H1 (cell line): ENCODE measurements at regions of chr7 and their contacts with region 1.

Region 1: DNA sequence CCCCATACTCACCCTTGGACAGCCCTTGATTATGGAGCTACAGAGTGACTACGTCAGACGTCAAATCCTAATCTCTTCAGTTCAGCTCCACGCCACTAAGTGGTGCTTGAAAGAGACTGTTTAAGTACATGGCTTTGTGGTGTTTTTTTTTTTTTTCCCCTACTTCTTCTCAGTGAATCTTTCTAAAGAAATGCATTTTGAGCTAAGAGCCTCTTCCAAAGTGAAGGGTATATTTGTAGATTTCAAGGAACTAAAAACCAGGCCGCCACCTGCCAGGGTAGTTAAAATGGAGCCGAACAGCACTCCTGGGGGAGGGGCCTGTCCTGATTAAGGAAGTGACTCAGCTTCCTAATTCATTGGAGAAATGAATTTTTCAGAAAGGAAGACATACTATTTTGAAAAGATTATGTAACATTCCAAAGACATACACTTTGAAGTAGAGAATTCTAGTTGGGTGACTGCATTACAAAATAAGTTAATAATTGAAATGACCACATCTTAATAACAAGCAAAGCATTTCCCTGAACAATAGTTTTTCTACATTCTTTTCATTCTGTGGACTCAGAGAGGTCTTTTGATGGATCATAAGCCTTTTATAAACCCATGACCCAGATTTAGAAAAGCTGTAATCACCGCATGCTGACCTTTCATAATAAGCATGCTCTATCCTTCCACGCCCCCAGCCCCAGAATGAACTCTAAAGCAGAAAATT is 20.6 kb upstream of the VPS41 start:
- DNase-seq: no peak
- H3K4me3 ChIP-seq: no peak overlapping the region
- H3K27ac ChIP-seq: no peak overlapping the region
- H3K4me1 ChIP-seq: peaks cover 0 to 6% (median 0%) of the 10 kb centered on the region in 4 experiments; a peak in 2 of 7 replicates
- H3K27me3 ChIP-seq: no peaks in the 10 kb centered on the region
- CTCF ChIP-seq: no peak
- EP300 ChIP-seq: no peak
- POLR2A ChIP-seq: no peak
- RAD21 ChIP-seq: no peak

Region 2: GRCh38 chr7:38858259-38859165 is 71.1 kb before region 1 on chr7:
- CTCF ChIA-PET with region 1: no interaction called
- POLR2A ChIA-PET with region 1: no interaction called
- DNase-seq: no peak
- H3K4me3 ChIP-seq: no peak overlapping the region
- H3K27ac ChIP-seq: no peak overlapping the region
- H3K4me1 ChIP-seq: no peaks in the 10 kb centered on the region
- H3K27me3 ChIP-seq: no peaks in the 10 kb centered on the region
- CTCF ChIP-seq: no peak
- EP300 ChIP-seq: no peak
- POLR2A ChIP-seq: no peak
- RAD21 ChIP-seq: no peak

Region 3: DNA sequence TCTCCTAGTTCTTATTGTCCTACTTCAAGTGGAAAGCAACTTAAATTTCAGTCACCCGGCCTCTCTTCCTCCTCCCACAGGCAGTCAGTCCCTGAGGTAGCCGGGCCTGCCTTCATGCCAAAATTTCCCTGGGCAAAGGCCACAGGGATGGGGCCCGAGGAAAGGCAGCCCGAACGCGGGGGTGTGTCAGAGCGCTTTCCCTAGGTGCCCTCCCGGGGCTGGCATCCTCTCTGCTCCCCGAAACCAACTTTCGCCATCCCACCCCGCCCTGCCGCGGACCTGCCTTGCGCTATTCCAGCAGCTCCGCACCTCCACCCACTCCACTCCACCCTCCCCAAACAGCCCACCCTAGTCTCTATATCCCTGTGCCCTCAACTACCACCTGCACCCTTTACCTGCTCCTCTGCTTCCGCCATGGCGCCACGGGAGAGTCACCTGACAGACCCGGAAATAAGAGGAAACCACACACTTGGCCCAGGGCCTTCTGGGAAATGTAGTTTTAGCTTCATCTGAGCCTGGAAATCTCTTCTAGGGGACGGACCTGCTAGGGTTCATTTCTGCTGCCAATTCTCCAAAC is 20.8 kb before region 1 on chr7 and contains the start of gene VPS41:
- CTCF ChIA-PET with region 1: interaction called, 11 read pairs
- POLR2A ChIA-PET with region 1: no interaction called
- DNase-seq: peak in 1 of 2 experiments; percentile 80
- H3K4me3 ChIP-seq: peak within 1 kb of the TSS; percentile 87 to 92 (median 90)
- H3K27ac ChIP-seq: peak within 1 kb of the TSS; percentile 39; the same call in 1 of the 2 replicates
- H3K4me1 ChIP-seq: peaks cover 0 to 3% (median 1%) of the 10 kb centered on the region in 4 experiments; a peak in 1 of 7 replicates
- H3K27me3 ChIP-seq: no peaks in the 10 kb centered on the region
- CTCF ChIP-seq: no peak
- EP300 ChIP-seq: no peak
- POLR2A ChIP-seq: peak in 1 of 2 experiments; percentile 77; a peak in 2 of 3 replicates
- RAD21 ChIP-seq: no peak
- total RNA-seq, gene VPS41: 51.4 and 63.3 TPM in 2 replicates